ENCODE measurements at regions of chr19 and their contacts with region 1.

Region 1: DNA sequence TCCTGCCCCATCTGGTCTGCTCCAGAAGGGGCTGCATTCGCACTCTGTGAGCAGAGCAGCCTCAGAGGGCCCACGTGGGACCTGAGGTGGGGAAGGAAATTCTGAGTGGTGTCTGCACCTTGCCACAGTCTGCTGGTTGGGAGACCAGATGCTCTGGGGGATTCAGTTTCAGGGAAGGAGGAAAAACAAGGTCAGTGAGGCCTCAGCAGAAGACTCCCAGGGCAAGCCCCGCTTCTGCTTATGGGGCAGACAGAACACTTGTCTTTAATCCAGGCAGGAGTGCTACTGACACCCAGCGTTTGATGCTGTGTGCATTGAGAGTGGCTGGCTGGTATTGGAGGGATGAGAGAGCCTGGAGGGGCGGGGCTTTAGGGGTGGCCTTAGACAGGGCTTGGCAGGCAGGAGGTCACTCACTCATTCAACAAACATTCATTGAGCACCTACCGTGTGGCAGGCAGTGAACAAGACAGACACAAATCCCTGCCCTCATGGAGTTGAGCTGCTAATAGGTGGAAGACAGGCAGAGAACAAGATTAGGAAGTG is 4.9 kb upstream of the CLEC17A start:
- DNase-seq: no peak
- H3K4me3 ChIP-seq: no peak overlapping the region
- H3K27ac ChIP-seq: no peak overlapping the region
- H3K4me1 ChIP-seq: peaks cover 3 to 11% (median 6%) of the 10 kb centered on the region in 4 donors
- H3K27me3 ChIP-seq: no peaks in the 10 kb centered on the region
- CTCF ChIP-seq: no peak
- EP300 ChIP-seq: no peak
- POLR2A ChIP-seq: no peak

Region 2: DNA sequence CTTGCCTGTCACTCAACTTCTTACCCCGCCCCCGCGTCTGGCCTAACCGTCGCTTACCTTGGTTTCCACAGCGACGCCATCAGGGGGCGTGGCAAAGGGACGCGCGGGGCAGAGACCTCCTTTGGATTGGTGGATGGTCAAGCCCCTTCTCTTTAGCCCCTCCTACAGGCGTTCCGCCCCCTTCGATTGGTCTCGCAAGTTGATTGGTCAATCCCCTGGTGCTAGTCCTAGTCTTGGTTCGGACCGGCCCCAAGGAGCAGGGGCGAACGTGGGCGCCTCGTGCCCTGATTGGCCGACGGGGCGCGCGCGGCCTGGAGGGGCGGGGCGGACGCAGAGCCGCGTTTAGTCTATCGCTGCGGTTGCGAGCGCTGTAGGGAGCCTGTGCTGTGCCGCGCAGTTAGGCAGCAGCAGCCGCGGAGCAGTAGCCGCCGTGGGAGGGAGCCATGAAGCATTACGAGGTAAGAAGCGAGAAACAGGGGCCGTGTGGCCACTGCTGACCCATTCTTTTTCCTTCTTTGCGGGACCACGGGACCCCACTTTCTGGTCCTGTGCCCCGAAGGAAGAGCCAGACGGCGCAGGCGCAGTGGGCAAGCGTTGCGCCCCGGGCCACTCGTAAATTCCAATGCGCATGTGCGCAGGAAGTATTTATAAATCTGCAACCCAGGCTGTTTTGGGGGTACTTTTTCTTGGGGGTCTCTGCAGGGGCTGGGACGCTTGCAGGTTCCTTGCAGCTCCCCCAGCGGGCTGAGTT is 48.5 kb before region 1 on chr19 and contains the start of gene TECR:
- intact Hi-C with region 1: no loop called
- DNase-seq: peak; percentile 100
- H3K4me3 ChIP-seq: peak within 1 kb of the TSS; percentile 59 to 87 (median 68)
- H3K27ac ChIP-seq: peak within 1 kb of the TSS; percentile 87 to 97 (median 94)
- H3K4me1 ChIP-seq: peaks cover 4 to 37% (median 30%) of the 10 kb centered on the region in 4 donors
- H3K27me3 ChIP-seq: no peaks in the 10 kb centered on the region
- CTCF ChIP-seq: peak in 1 of 7 experiments; percentile 20
- EP300 ChIP-seq: no peak
- POLR2A ChIP-seq: peak in 2 of 4 donors; percentile 96
- total RNA-seq, gene TECR: 10.5 to 90.4 (median 54.0) TPM

Region 3: DNA sequence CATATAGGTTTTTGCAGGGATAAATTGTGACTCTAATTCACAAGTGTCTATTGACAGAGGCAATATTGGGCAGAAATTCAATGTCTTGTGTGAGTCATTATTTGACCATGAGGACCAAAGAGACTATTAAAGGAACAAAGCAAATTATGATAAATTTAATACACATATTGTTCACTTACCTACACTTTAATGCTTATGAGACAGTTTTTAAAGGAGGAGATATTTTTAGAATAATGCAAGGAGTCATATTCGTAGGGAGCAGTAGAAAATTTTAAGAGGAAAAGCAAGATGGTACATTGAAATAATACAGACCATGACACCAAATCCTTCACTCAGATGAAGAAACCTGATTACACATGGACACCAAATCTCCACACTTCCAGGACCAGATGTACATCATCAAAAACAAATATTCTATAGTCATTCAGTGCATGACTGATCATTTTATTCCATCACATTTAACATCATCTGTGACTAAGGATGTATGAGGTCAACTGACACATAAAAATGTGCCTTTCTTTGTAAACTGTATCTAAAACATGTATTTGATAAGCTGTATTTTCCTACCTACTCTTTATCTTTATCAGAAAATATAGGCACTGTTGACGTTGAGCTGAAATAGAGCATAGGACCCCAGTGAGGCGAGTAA is 312.2 kb after region 1 on chr19:
- intact Hi-C with region 1: loop called (anchors 5 kb)
- DNase-seq: no peak
- H3K4me3 ChIP-seq: no peak overlapping the region
- H3K27ac ChIP-seq: no peak overlapping the region
- H3K4me1 ChIP-seq: peaks cover 0 to 8% (median 4%) of the 10 kb centered on the region in 4 donors
- H3K27me3 ChIP-seq: peaks cover 0 to 31% (median 0%) of the 10 kb centered on the region in 3 donors
- CTCF ChIP-seq: no peak
- EP300 ChIP-seq: no peak
- POLR2A ChIP-seq: no peak